ENCODE measurements at regions of chr9 and their contacts with region 1.

Region 1: GRCh38 chr9:71819115-71819739 is 50.9 kb upstream of the CEMIP2 start:
- DNase-seq: peak; percentile 21 to 37
- ATAC-seq: no peak
- H3K4me3 ChIP-seq: no peak overlapping the region
- H3K27ac ChIP-seq: no peak overlapping the region
- H3K4me1 ChIP-seq: peaks cover 9% of the 10 kb centered on the region; the same call in 1 of the 3 replicates
- CTCF ChIP-seq: peak; percentile 91
- EP300 ChIP-seq: no peak
- POLR2A ChIP-seq: no peak
- RAD21 ChIP-seq: peak; percentile 75 to 79

Region 2: GRCh38 chr9:71571186-71571585 is 248.0 kb before region 1 on chr9:
- CTCF ChIA-PET with region 1: no interaction called
- POLR2A ChIA-PET with region 1: no interaction called
- DNase-seq: no peak
- ATAC-seq: no peak
- H3K4me3 ChIP-seq: no peak overlapping the region
- H3K27ac ChIP-seq: no peak overlapping the region
- H3K4me1 ChIP-seq: no peaks in the 10 kb centered on the region
- CTCF ChIP-seq: no peak
- EP300 ChIP-seq: no peak
- POLR2A ChIP-seq: no peak
- RAD21 ChIP-seq: no peak

Region 3: GRCh38 chr9:71604197-71605063 is 214.8 kb before region 1 on chr9:
- CTCF ChIA-PET with region 1: interaction called, 11 read pairs
- POLR2A ChIA-PET with region 1: no interaction called
- DNase-seq: peak; percentile 44 to 78
- ATAC-seq: peak; percentile 89 to 99
- H3K4me3 ChIP-seq: no peak overlapping the region
- H3K27ac ChIP-seq: peak overlapping the region; percentile 54 to 56
- H3K4me1 ChIP-seq: peaks cover 17% of the 10 kb centered on the region
- CTCF ChIP-seq: peak; percentile 90
- EP300 ChIP-seq: no peak
- POLR2A ChIP-seq: no peak
- RAD21 ChIP-seq: peak; percentile 94

Region 4: DNA sequence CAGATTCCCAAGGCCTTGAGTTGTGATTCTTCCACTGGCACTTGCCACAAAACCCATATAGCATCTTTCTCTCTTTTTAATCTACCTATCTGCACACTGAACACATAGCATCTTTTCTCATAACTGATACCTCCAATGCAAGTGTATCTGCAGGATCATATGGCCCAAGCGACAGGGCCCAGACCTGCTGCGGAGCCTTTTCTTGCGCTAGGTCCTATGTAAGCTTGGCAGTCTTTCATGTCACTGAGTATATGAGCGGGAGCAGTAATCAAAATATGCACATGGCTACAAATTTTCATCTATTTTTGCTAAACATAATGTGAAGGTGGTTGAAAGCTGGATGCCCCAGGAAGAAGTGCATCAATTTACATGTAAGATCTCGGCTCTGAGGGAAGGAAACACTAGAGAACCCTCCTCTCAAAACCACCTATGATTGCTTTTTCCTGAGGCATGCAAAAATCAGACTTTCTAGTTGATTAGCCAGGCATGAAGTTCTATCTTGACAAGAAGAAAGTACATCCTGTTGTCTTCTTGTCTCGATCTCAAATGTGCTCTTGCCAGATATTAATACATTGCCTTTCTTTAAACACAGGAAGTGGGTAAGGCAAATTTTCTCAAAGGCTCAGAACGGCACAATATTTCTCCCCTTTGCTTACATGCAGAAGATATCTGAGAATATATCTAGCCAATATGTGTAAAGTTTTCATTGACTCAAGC is 24.0 kb before region 1 on chr9:
- CTCF ChIA-PET with region 1: interaction called, 17 read pairs
- POLR2A ChIA-PET with region 1: no interaction called
- DNase-seq: no peak
- ATAC-seq: no peak
- H3K4me3 ChIP-seq: no peak overlapping the region
- H3K27ac ChIP-seq: peak overlapping the region; percentile 84 to 88
- H3K4me1 ChIP-seq: peaks cover 63% of the 10 kb centered on the region
- CTCF ChIP-seq: no peak
- EP300 ChIP-seq: no peak
- POLR2A ChIP-seq: no peak
- RAD21 ChIP-seq: no peak

Region 5: DNA sequence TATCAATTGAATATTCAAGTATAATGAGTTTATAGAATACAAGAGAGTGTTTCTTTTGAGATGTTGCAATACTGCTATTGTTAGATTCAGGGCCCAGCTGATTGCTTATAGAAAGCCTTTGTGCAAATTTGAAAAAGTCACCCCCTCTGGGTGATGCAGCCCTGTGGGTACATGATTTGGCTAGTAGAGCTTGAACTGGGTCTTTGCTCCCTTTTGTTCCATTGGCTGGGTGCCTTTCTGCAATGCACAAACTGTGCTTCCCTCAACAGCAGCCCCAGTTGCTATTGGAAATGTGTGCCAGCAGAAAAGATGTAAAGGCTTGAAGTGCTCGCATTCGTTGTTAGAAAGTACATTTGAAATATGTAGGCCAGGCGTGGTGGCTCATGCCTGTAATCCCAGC is 10.9 kb after region 1 on chr9:
- CTCF ChIA-PET with region 1: interaction called, 22 read pairs
- POLR2A ChIA-PET with region 1: no interaction called
- DNase-seq: no peak
- ATAC-seq: no peak
- H3K4me3 ChIP-seq: no peak overlapping the region
- H3K27ac ChIP-seq: no peak overlapping the region
- H3K4me1 ChIP-seq: peaks cover 10% of the 10 kb centered on the region
- CTCF ChIP-seq: no peak
- EP300 ChIP-seq: no peak
- POLR2A ChIP-seq: no peak
- RAD21 ChIP-seq: no peak